K562 (cell line): ENCODE measurements at regions of chr10 and their contacts with region 1.

Region 1: DNA sequence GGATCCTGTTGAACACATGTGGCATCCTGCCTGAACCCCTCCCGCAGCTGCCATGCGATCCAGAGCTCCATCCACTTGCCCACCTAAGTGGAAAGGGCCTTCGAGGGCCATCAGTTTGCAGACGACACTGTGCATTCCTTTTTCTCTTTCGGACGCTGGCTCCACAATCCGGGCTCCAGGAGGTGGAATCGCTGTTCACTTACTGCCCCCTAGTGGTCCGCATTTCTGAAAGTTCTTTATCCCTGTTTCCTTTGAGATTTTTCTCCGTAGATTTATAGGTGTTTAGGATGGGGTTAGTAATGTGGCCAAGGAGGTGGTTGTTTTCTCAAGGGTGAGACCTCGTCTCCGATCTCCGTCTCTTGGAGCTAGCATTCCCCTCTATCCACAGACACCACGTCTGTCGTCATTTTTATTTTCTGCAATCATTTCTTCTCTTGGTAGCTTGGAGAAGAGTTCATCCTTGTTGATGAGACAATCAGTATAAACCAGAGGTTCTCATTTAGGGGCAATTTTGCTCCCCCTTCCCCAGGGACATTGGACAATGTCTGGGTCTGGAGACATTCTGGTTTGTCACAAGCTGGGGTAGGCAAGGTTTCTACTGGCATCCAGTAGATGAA is 204.6 kb downstream of the ARHGAP21 start:
- DNase-seq: peak; percentile 56 to 77 (median 62)
- ATAC-seq: peak; percentile 89
- H3K4me3 ChIP-seq: no peak overlapping the region
- H3K27ac ChIP-seq: no peak overlapping the region
- H3K4me1 ChIP-seq: peaks cover 0 to 3% of the 10 kb centered on the region in 2 experiments; a peak in 1 of 5 replicates
- H3K27me3 ChIP-seq: peaks cover 25 to 28% of the 10 kb centered on the region in 2 experiments; a peak in 4 of 5 replicates
- CTCF ChIP-seq: peak; percentile 63 to 83 (median 79)
- EP300 ChIP-seq: no peak
- POLR2A ChIP-seq: no peak
- RAD21 ChIP-seq: peak; percentile 51 to 76

Region 2: GRCh38 chr10:24556750-24557742 is 38.0 kb after region 1 on chr10:
- CTCF ChIA-PET with region 1: interaction called, 3 read pairs
- POLR2A ChIA-PET with region 1: no interaction called
- in situ Hi-C with region 1: no loop called
- intact Hi-C with region 1: loop called (anchors 2 kb)
- DNase-seq: peak; percentile 47 to 77 (median 51)
- ATAC-seq: peak; percentile 71
- H3K4me3 ChIP-seq: no peak overlapping the region
- H3K27ac ChIP-seq: no peak overlapping the region
- H3K4me1 ChIP-seq: peaks cover 4 to 5% of the 10 kb centered on the region in 2 experiments; a peak in 4 of 5 replicates
- H3K27me3 ChIP-seq: peaks cover 7 to 19% of the 10 kb centered on the region in 2 experiments; a peak in 3 of 5 replicates
- CTCF ChIP-seq: peak; percentile 71 to 78 (median 73)
- EP300 ChIP-seq: no peak
- POLR2A ChIP-seq: no peak
- RAD21 ChIP-seq: peak; percentile 58 to 77